Stomach (tissue), 19 donors: ENCODE measurements at regions of chr4 and their contacts with region 1.

Region 1: GRCh38 chr4:143195581-143195980 is 10.9 kb downstream of the USP38 start:
- DNase-seq: no peak
- H3K4me3 ChIP-seq: no peak overlapping the region
- H3K27ac ChIP-seq: no peak overlapping the region
- H3K4me1 ChIP-seq: peaks cover 0 to 26% (median 11%) of the 10 kb centered on the region in 4 donors
- H3K27me3 ChIP-seq: no peaks in the 10 kb centered on the region
- CTCF ChIP-seq: no peak
- EP300 ChIP-seq: no peak
- POLR2A ChIP-seq: no peak

Region 2: GRCh38 chr4:143286701-143287571 is 91.4 kb after region 1 on chr4:
- intact Hi-C with region 1: no loop called
- DNase-seq: no peak
- H3K4me3 ChIP-seq: no peak overlapping the region
- H3K27ac ChIP-seq: peak overlapping the region in 4 of 5 donors; percentile 61 to 76 (median 76)
- H3K4me1 ChIP-seq: peaks cover 0 to 42% (median 6%) of the 10 kb centered on the region in 4 donors
- H3K27me3 ChIP-seq: no peaks in the 10 kb centered on the region
- CTCF ChIP-seq: no peak
- EP300 ChIP-seq: no peak
- POLR2A ChIP-seq: no peak

Region 3: GRCh38 chr4:143489106-143489505 is 293.5 kb after region 1 on chr4:
- intact Hi-C with region 1: loop called (anchors 5 kb)
- DNase-seq: no peak
- H3K4me3 ChIP-seq: no peak overlapping the region
- H3K27ac ChIP-seq: no peak overlapping the region
- H3K4me1 ChIP-seq: no peaks in the 10 kb centered on the region
- H3K27me3 ChIP-seq: no peaks in the 10 kb centered on the region
- CTCF ChIP-seq: no peak
- EP300 ChIP-seq: no peak
- POLR2A ChIP-seq: no peak